Dendritic cell treated with granulocyte-macrophage colony-stimulating factor and Interleukin-4, amounts not matched to agents 40 ng/mL and 50 ng/mL, for 4 days (primary cell): ENCODE measurements at regions of chr17 and their contacts with region 1.

Region 1: DNA sequence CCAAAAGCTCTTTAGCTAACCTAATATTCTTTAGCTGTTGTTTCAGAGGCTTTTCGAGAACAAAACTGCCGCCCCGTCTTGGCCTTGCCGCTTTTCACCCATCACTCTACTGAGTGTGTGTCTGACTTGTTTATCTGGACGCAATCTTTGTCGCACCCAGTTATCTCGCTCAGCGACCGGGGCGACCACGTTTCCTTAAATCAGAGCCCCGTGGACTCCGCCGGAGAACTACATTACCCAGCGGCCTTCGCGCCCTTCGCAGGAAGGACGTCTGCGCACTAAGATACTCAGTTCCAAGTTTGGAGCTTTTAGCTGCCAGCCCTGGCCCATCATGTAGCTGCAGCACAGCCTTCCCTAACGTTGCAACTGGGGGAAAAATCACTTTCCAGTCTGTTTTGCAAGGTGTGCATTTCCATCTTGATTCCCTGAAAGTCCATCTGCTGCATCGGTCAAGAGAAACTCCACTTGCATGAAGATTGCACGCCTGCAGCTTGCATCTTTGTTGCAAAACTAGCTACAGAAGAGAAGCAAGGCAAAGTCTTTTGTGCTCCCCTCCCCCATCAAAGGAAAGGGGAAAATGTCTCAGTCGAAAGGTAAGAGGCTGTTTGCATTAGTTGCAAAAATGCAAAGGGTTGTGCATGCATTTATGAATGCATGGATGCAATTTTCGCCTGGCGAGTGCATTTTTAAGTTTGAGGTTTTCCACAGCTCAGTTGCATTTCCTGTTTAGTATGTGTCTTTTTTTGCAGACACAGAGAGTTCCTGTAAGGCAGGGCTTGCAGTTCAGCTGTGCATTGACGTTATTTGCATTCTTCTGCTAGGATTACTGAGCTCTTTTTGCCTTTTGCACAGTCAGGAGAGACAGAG is at the start of gene MAP2K6:
- H3K4me3 Mint-ChIP-seq: no peak within 1 kb of the TSS
- H3K27ac Mint-ChIP-seq: no peak within 1 kb of the TSS
- H3K4me1 Mint-ChIP-seq: peaks cover 5% of the 10 kb centered on the region
- H3K27me3 Mint-ChIP-seq: no peaks in the 10 kb centered on the region

Region 2: GRCh38 chr17:69501591-69502468 is 87.2 kb after region 1 on chr17:
- intact Hi-C with region 1: loop called (anchors 5 kb)
- H3K4me3 Mint-ChIP-seq: peak overlapping the region; percentile 85
- H3K27ac Mint-ChIP-seq: peak overlapping the region; percentile 91
- H3K4me1 Mint-ChIP-seq: peaks cover 72% of the 10 kb centered on the region
- H3K27me3 Mint-ChIP-seq: no peaks in the 10 kb centered on the region